ENCODE measurements at regions of chr6 and their contacts with region 1.

Region 1: DNA sequence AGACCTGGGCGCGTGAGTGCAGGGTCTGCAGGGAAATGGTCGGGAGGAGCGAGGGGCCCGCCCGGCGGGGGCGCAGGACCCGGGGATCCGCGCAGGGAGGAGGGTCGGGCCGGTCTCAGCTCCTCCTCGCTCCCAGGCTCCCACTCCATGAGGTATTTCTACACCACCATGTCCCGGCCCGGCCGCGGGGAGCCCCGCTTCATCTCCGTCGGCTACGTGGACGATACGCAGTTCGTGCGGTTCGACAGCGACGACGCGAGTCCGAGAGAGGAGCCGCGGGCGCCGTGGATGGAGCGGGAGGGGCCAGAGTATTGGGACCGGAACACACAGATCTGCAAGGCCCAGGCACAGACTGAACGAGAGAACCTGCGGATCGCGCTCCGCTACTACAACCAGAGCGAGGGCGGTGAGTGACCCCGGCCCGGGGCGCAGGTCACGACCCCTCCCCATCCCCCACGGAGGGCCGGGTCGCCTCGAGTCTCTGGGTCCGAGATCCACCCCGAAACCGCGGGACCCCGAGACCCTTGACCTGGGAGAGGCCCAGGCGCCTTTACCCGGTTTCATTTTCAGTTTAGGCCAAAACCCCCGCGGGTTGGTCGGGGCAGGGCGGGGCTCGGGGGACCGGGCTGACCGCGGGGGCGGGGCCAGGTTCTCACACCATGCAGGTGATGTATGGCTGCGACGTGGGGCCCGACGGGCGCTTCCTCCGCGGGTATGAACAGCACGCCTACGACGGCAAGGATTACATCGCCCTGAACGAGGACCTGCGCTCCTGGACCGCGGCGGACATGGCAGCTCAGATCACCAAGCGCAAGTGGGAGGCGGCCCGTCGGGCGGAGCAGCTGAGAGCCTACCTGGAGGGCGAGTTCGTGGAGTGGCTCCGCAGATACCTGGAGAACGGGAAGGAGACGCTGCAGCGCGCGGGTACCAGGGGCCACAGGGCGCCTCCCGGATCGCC is 54.2 kb upstream of the HLA-A start:
- DNase-seq: peak; percentile 68 to 77
- H3K4me3 ChIP-seq: peak overlapping the region; percentile 66
- H3K4me3 Mint-ChIP-seq: peak overlapping the region; percentile 72
- H3K27ac Mint-ChIP-seq: peak overlapping the region; percentile 84
- H3K4me1 ChIP-seq: no peaks in the 10 kb centered on the region; the same call in 1 of the 2 replicates
- H3K4me1 Mint-ChIP-seq: peaks cover 7% of the 10 kb centered on the region
- H3K27me3 ChIP-seq: no peaks in the 10 kb centered on the region
- H3K27me3 Mint-ChIP-seq: no peaks in the 10 kb centered on the region
- CTCF ChIP-seq: no peak

Region 2: DNA sequence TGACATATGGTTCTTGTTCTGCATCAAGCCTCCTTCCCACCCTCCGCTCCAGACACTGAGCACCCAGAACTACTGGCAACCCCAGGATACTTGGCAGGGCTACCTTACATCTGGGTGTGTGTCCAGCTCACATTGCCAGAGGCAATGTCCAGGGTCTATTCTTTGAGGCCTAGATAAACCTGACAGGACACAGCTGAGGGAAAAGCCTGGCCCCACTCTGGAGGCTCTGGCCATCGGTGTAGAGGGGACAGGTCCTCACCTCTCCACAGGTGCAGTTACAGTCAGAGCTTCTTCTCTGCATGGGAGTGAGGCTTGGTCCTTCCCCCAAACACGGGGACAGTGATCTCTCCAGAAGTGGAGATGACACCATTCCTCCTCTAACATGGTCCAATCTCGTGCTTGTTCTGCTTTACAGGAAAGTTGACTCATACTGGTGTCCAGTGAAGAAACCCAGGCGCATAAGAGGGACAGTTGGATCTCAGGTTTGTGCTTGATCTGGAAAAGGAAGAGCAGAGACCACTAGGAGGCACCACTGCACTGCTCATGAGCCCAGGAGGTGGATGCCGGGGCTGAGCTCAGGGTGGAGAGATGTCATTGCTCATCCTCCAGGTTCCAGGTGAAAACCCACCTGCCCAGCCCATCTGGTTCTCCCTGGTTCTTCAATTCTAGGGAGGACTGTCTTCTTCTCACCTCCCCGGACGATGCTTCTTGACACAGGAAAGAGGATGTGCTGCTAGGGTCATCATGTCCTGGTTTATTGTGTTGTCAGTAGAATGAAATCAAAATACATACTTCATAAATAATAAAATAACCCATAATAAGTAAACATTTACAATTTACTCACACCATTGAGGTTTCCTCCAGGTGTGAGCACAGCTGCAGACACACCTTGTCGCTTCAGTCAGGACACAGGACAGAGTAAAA is 150.1 kb before region 1 on chr6:
- CTCF ChIA-PET with region 1: no interaction called
- POLR2A ChIA-PET with region 1: no interaction called
- intact Hi-C with region 1: no loop called
- DNase-seq: peak; percentile 66 to 72
- H3K4me3 ChIP-seq: no peak overlapping the region
- H3K4me3 Mint-ChIP-seq: no peak overlapping the region
- H3K27ac Mint-ChIP-seq: no peak overlapping the region
- H3K4me1 ChIP-seq: no peaks in the 10 kb centered on the region
- H3K4me1 Mint-ChIP-seq: no peaks in the 10 kb centered on the region
- H3K27me3 ChIP-seq: no peaks in the 10 kb centered on the region
- H3K27me3 Mint-ChIP-seq: peaks cover 3% of the 10 kb centered on the region
- CTCF ChIP-seq: peak; percentile 75 to 81

Region 3: DNA sequence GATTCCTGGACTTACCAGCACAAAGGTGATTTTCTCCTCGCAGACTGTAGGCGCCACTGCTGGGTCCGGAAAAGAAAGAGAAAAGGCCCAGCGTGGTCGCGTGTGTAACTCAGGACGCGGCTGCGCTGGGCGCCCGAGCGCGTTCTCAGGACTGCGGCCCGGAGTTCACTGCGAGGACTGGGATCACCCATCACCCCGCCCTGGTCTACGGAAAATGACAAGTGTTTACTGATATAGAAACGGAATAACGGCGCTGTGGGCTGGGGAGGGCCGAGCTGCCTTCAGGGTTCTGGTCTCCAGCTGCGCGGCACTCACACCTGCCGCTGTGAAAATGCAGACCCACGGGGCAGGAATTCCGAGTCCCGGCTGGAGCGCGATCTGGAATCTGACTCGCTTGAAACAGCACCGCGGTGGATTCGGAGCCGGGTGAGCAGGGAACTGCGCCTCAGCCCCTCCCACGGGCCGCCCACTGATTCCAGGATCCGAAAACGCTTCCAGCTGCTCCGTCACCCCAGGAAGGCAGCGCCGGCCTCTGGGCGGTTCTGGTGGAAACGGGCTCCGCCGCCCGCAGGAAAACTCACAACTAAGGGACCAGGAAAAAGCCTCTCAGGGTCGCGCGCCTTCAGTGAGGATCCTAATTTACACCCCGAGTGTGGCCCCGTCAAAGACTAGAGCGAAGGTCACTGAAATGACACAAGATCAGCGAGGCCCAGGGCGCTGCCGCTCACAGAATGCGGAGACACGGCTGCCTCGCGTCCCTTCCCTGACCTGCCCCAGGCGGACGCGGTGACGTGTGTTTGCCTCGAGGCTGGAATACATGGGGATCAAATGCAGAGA is 88.7 kb after region 1 on chr6:
- CTCF ChIA-PET with region 1: no interaction called
- POLR2A ChIA-PET with region 1: no interaction called
- intact Hi-C with region 1: loop called (anchors 5 kb)
- DNase-seq: peak; percentile 79
- H3K4me3 ChIP-seq: peak overlapping the region; percentile 57
- H3K4me3 Mint-ChIP-seq: peak overlapping the region; percentile 88
- H3K27ac Mint-ChIP-seq: peak overlapping the region; percentile 78
- H3K4me1 ChIP-seq: no peaks in the 10 kb centered on the region
- H3K4me1 Mint-ChIP-seq: peaks cover 7% of the 10 kb centered on the region
- H3K27me3 ChIP-seq: no peaks in the 10 kb centered on the region
- H3K27me3 Mint-ChIP-seq: peaks cover 11% of the 10 kb centered on the region
- CTCF ChIP-seq: peak in 1 of 2 experiments; percentile 50

Measured in Caco-2 (cell line).